Mammary epithelial cell (primary cell): ENCODE measurements at regions of chr3 and their contacts with region 1.

Region 1: DNA sequence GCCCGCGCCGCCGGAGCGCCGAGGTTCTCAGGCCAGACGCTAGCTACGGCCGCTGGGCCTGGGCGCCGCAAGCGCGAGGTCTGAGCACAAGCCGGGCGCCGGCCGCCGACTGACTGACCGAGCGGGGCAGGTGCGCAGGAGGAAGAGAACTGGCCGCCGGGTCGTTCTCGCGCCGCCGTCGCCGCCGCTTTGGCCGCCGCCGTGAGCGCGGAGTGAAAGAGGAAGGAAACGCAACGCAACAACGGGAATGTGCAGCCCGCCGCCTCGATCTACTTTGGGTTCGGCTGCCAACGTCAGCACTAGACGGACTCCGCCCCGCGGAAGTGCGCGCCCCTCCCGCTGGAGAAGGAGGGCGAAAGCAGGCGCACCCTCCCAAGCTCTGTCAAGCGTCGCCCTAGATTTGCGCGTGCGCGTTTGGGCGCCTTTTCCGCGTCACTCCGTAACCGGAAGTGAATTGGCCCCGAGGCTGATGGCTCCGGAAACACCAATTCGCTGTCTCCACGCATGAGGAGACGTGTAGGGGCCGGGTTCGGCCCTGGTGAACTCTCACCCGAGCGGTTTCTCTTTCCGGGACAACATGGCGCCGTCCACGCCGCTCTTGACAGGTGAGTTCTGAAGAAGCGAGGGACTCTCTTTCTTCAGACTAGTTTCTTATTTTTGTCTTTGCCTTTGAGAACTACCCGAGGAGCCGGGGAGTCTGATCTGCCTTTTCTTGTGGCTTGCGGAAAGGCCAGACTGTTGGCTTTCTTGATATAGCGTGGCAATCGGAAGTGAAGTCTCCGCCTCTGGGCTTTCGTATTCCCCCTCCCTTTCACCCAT is at the starts of genes EIF2A and SERP1:
- DNase-seq: peak; percentile 99
- H3K4me3 ChIP-seq: peak within 1 kb of the TSS; percentile 96 to 99 (median 97)
- H3K27ac ChIP-seq: peak within 1 kb of the TSS; percentile 96
- H3K4me1 ChIP-seq: peaks cover 14% of the 10 kb centered on the region
- H3K27me3 ChIP-seq: no peaks in the 10 kb centered on the region
- CTCF ChIP-seq: no peak
- total RNA-seq, gene EIF2A: 76.6 to 140 TPM
- total RNA-seq, gene SERP1: 95.2 to 140 TPM

Region 2: GRCh38 chr3:150238998-150239619 is 307.3 kb before region 1 on chr3:
- CTCF ChIA-PET with region 1: no interaction called
- dilution Hi-C with region 1: no loop called
- in situ Hi-C with region 1: no loop called
- intact Hi-C with region 1: loop called (anchors 1 kb)
- DNase-seq: peak; percentile 59
- H3K4me3 ChIP-seq: no peak overlapping the region
- H3K27ac ChIP-seq: no peak overlapping the region
- H3K4me1 ChIP-seq: peaks cover 38% of the 10 kb centered on the region
- H3K27me3 ChIP-seq: no peaks in the 10 kb centered on the region
- CTCF ChIP-seq: peak; percentile 62 to 72

Region 3: DNA sequence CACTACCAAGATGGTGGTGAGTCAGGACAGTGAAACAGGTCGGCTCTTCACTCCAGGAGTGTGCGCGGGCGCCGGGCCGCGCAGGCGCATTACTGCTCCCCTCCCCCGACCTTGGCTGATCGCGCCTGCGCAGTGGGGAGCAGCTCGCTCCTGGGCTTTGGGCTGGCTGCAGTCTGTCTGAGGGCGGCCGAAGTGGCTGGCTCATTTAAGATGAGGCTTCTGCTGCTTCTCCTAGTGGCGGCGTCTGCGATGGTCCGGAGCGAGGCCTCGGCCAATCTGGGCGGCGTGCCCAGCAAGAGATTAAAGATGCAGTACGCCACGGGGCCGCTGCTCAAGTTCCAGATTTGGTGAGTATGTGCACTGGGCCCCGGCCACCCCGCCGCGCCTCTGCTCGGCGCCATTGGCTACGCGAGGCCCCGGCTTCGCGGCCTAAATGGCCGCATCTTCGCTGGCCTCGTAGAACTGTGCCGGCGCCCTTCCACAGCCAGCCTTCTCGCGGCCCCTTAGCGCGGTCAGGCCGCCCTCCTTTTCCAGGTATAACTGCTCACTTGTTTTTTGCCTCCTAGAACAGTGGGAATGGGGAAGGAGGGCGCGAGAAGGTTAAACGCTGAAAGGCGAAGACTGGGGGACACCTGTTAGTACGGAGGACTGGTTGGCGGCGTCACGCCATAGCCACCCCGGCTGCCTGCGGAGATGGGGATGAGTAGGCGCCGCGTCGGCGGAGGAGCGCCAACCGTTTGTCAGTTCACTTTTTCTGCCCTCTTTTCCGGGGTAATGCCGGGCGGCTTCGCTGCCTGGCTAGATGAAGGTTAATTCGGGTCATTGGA is 56.9 kb after region 1 on chr3 and contains the start of gene SELENOT:
- CTCF ChIA-PET with region 1: no interaction called
- dilution Hi-C with region 1: no loop called
- in situ Hi-C with region 1: no loop called
- intact Hi-C with region 1: loop called (anchors 1 kb)
- DNase-seq: peak; percentile 96
- H3K4me3 ChIP-seq: peak within 1 kb of the TSS; percentile 66 to 95 (median 77)
- H3K27ac ChIP-seq: peak within 1 kb of the TSS; percentile 68
- H3K4me1 ChIP-seq: peaks cover 29% of the 10 kb centered on the region
- H3K27me3 ChIP-seq: no peaks in the 10 kb centered on the region
- CTCF ChIP-seq: peak; percentile 12 to 33
- total RNA-seq, gene SELENOT: 111 to 125 TPM

Region 4: DNA sequence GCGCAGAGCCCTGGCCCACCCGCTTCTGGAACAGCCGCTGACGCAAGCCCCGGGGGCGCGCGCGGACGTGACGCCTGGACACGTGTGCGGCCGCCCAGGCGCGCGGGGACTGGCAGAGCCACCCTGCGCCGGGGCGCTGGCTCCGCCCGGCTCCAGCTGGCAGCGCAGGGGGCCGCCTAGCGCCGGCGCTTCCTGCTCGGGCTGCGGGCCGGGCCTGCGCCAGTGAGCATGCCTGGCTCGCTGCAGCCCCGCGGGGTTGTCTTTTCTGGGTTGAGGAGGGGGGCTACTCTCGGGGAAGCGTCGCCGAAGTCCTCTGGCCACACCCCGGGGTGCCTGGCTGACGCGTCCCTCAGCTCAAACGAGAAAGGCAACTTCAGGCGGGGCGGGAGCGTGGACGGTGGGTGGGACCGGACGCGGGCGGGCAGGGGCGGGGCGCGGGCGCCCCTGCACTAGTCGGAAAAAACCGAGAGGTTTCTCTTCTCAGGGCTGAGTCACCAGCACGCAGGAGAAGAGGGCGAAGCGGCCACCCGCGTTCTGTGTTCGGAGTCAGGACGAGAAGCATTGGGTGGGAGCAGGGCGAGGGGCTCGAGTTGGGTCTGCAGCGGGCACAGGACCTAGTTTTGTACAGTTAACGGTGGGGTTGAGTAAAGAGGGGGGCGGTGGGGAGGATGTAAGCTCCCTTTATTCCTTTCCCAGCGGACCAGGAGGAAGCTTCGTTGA is 216.8 kb after region 1 on chr3 and contains the start of gene SIAH2:
- CTCF ChIA-PET with region 1: no interaction called
- dilution Hi-C with region 1: no loop called
- in situ Hi-C with region 1: no loop called
- intact Hi-C with region 1: loop called (anchors 5 kb)
- DNase-seq: peak; percentile 95
- H3K4me3 ChIP-seq: peak within 1 kb of the TSS; percentile 59 to 96 (median 87)
- H3K27ac ChIP-seq: peak within 1 kb of the TSS; percentile 75
- H3K4me1 ChIP-seq: peaks cover 30% of the 10 kb centered on the region
- H3K27me3 ChIP-seq: no peaks in the 10 kb centered on the region
- CTCF ChIP-seq: no peak
- total RNA-seq, gene SIAH2: 23.7 to 30.5 TPM

Region 5: DNA sequence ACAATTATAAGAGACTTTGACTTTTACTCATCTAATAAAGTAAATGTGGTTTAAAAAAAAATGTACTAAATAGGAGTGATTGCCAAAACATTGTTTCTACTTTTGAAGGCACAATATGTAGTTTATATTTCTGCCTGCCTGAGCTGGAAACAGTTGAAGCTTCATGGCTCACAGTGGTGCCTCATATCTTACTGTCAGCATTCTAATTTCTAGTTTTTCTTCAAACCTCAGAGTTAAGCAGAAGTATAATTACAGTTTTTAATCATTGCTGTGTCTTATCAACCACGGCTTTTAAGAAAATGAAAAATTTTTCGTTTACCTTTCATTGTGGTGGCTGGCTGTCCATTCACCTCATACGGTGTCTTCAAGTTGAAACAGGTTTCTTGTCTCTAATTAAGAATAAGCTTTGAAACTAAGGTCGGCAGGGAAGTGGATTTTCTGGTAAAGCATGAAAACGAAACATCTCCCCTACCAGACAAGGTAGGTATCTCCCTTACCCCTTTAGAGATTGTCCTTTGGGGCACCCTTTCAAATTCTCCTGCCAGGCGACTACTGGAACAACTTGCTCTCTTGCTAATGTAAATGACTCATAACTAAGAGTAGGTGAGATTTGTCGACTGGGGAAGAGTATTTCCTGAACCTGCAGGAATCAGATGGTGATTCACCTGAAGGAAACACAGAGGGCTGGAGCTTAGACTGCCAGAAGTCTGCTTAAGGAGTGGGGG is 770.0 kb after region 1 on chr3 and contains the start of gene GPR87:
- CTCF ChIA-PET with region 1: no interaction called
- dilution Hi-C with region 1: no loop called
- in situ Hi-C with region 1: no loop called
- intact Hi-C with region 1: loop called (anchors 5 kb)
- DNase-seq: peak; percentile 95
- H3K4me3 ChIP-seq: peak within 1 kb of the TSS; percentile 63 to 91 (median 89)
- H3K27ac ChIP-seq: peak within 1 kb of the TSS; percentile 99
- H3K4me1 ChIP-seq: peaks cover 64% of the 10 kb centered on the region
- H3K27me3 ChIP-seq: no peaks in the 10 kb centered on the region
- CTCF ChIP-seq: no peak
- total RNA-seq, gene GPR87: 66.1 to 78.7 TPM